ENCODE measurements at regions of chr19 and their contacts with region 1.

Region 1: GRCh38 chr19:58451358-58452101 is at the start of gene ZNF324B:
- DNase-seq: peak; percentile 86 to 93
- H3K4me3 ChIP-seq: peak within 1 kb of the TSS; percentile 81
- H3K27ac ChIP-seq: no peak within 1 kb of the TSS
- H3K4me1 ChIP-seq: 0 out of 2 replicates have a peak, but pooled peaks cover 5% of the 10 kb centered on the region
- H3K27me3 ChIP-seq: peaks cover 6% of the 10 kb centered on the region; the same call in 1 of the 2 replicates
- CTCF ChIP-seq: no peak
- total RNA-seq, gene ZNF324B: 4.3 and 6.1 TPM in 2 replicates

Region 2: DNA sequence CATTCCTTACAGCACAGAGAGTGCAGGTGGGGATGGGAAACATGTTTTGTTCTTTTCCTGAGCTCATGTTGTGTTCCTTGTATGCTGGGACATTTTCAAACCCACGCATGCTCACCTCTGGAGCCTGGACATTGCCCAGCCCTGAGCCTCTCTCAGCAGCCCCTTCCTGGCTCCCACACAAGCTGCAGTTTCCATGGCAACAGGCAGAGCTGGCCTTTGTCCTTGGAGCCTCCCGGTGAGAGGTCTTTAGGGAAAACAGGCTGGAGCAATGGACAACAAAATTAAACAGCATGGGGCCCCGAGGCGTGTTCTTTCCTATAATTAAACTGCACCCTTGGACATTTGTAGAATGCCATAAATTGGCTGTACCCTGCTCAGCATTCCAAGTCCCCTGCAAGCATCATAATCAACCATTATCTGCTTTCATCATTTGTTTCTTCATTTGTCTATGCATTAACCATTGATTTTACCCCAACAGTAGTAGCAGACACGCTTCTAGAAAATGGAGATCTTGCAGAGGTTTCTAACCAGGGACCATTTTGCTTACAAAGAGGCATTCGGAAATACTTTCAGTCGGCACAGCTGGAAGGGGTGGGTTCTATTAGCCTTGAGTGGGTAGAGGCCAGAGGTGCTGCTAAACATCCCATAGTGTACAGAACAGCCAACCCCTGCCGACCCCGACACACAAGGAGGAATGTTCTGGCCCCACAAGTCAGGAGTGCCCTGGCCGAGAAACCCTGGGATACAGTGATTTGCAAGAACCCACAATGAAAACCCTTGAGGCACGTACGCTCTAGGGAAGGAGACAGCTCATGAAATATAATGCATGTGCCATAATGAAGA is 1477.6 kb before region 1 on chr19:
- CTCF ChIA-PET with region 1: no interaction called
- POLR2A ChIA-PET with region 1: no interaction called
- intact Hi-C with region 1: no loop called
- DNase-seq: no peak
- H3K4me3 ChIP-seq: no peak overlapping the region
- H3K27ac ChIP-seq: no peak overlapping the region
- H3K4me1 ChIP-seq: no peaks in the 10 kb centered on the region
- H3K27me3 ChIP-seq: peaks cover 92% of the 10 kb centered on the region
- CTCF ChIP-seq: no peak

Region 3: DNA sequence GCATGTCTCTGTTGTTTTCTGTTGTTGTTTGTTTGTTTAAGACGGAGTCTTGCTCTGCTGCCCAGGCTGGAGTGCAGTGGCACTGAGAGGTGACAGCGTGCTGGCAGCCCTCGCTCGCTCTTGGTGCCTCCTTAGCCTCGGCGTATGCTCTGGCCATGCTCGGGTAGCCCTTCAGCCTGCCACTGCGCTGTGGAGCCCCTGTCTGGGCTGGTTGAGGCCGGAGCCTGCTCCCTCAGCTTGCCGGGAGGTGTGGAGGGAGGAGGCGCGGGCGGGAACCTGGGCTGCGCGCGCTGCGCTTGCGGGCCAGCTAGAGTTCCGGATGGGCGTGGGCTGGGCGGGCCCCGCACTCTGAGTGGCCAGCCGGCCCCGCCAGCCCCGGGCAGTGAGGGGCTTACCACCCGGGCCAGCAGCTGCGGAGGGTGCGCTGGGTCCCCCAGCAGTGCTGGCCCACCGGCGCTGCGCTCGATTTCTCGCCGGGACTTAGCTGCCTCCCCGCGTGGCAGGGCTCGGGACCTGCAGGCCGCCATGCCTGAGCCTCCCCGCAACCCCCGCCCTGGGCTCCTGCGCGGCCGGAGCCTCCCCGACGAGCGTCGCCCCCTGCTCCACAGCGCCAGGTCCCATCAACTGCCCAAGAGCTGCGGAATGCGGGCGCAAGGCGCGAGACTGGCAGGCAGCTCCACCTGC is 294.3 kb before region 1 on chr19:
- CTCF ChIA-PET with region 1: no interaction called
- POLR2A ChIA-PET with region 1: no interaction called
- intact Hi-C with region 1: no loop called
- DNase-seq: peak in 1 of 2 experiments; percentile 28
- H3K4me3 ChIP-seq: no peak overlapping the region
- H3K27ac ChIP-seq: no peak overlapping the region
- H3K4me1 ChIP-seq: no peaks in the 10 kb centered on the region
- H3K27me3 ChIP-seq: no peaks in the 10 kb centered on the region
- CTCF ChIP-seq: no peak

Region 4: DNA sequence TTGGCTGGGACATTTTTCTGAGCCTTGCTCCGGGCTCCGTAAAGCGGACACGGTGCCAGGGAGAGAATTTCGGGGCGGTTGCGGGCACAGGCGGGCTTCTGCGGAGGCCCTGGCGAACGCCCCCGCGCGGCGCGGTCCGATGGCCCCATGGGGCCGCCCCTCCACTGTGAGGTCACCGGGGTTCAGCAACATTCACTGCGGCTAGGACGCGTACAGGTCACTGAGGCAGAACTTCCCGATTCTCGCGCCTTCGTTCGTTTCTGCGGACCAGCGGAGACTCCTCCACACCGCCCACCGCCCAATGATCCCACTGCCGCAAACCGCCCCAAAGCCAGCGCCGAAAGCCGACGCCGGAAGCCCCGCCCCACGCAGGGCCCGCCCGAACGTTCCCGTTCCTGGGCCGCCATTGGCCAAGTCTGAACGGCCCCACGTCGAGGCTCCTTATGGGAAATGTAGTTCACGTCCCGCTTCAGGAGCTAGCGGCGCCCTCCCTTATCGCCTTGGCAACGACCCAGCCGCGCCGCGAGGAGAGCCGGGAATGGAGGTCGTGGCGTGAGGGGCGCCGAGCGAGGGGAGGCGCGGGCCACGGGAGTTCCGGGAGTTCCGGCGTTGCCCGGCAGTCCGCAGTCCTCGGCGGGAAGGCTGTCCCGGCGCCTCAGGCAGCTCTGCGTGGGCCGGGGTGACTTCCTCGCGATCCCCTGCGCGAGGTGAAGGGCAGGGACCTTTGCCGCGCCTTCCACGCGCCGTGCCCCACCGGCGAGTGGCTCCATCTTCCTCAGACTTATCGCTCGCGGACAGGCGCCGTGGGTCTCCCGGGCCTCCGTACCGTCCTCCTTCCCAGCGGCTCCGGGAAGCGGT is 43.1 kb before region 1 on chr19 and contains the start of gene ZNF584:
- CTCF ChIA-PET with region 1: no interaction called
- POLR2A ChIA-PET with region 1: interaction called, 5 read pairs
- intact Hi-C with region 1: loop called (anchors 1 kb)
- DNase-seq: peak; percentile 76 to 91
- H3K4me3 ChIP-seq: peak within 1 kb of the TSS; percentile 73
- H3K27ac ChIP-seq: peak within 1 kb of the TSS; percentile 9; the same call in 1 of the 2 replicates
- H3K4me1 ChIP-seq: peaks cover 12% of the 10 kb centered on the region
- H3K27me3 ChIP-seq: no peaks in the 10 kb centered on the region
- CTCF ChIP-seq: no peak
- total RNA-seq, gene ZNF584: 13.5 and 18.8 TPM in 2 replicates

Region 5: DNA sequence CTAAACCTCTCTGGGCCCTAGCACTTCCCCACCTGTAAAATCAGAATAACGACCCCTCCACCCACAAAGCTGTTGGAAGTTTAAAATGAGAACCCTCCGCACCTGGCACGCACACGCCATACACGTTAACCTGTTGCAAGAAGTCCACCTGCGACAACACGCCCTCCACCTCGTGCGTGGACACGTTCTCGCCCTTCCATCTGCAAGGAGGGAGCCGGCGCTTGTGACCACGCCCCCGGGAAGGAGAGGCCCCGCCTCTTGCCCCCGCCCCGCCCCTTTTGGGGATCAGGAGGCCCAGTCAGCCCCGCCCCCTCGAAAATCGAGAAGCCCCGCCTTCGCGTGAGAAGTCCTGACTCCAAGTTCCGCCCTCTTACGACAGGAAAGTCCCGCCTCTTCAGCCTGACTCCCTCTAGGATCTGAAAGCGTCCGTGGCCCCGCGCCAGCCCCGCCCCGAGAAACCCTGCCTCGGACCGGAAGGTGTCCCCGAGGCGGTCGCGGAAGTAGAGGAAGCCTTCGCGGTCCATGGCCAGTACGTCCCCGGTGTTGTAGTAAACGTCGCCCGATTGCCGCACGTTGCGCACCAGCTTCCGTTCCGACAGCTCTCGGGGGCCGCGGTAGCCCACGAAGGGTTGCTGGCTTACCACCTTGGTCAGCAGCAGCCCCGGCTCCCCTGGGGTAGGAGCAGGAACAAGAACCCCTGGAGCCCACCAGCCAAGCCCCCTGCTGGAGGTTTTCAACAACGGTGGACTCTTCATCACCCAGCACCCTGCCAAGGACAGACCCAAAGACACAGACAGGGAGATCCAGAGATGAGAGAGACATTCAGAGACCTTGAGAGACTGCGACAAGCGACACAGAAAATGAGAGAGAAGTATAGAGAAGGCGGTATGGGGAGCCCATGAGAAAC is 47.7 kb after region 1 on chr19:
- CTCF ChIA-PET with region 1: no interaction called
- POLR2A ChIA-PET with region 1: no interaction called
- intact Hi-C with region 1: no loop called
- DNase-seq: peak; percentile 92 to 97
- H3K4me3 ChIP-seq: peak overlapping the region; percentile 88
- H3K27ac ChIP-seq: no peak overlapping the region
- H3K4me1 ChIP-seq: no peaks in the 10 kb centered on the region
- H3K27me3 ChIP-seq: no peaks in the 10 kb centered on the region
- CTCF ChIP-seq: no peak

Region 6: GRCh38 chr19:58519355-58520256 is 68.1 kb after region 1 on chr19 and contains the start of gene ZBTB45:
- CTCF ChIA-PET with region 1: no interaction called
- POLR2A ChIA-PET with region 1: no interaction called
- intact Hi-C with region 1: no loop called
- DNase-seq: peak; percentile 83 to 92
- H3K4me3 ChIP-seq: peak within 1 kb of the TSS; percentile 83
- H3K27ac ChIP-seq: peak within 1 kb of the TSS; percentile 68
- H3K4me1 ChIP-seq: peaks cover 10% of the 10 kb centered on the region
- H3K27me3 ChIP-seq: no peaks in the 10 kb centered on the region
- CTCF ChIP-seq: peak; percentile 67
- total RNA-seq, gene ZBTB45: 8.1 and 8.9 TPM in 2 replicates

Measured in PC-9 (cell line).